Dendritic cell treated with granulocyte-macrophage colony-stimulating factor and Interleukin-4, amounts not matched to agents 40 ng/mL and 50 ng/mL, for 4 days (primary cell): ENCODE measurements at regions of chr1 and their contacts with region 1.

Region 1: GRCh38 chr1:150925816-150926741 is at the start of gene SETDB1:
- H3K4me3 Mint-ChIP-seq: peak within 1 kb of the TSS; percentile 91
- H3K27ac Mint-ChIP-seq: peak within 1 kb of the TSS; percentile 94
- H3K4me1 Mint-ChIP-seq: peaks cover 20% of the 10 kb centered on the region
- H3K27me3 Mint-ChIP-seq: no peaks in the 10 kb centered on the region

Region 2: GRCh38 chr1:150841626-150842025 is 84.5 kb before region 1 on chr1:
- intact Hi-C with region 1: loop called (anchors 10 kb)
- H3K4me3 Mint-ChIP-seq: no peak overlapping the region
- H3K27ac Mint-ChIP-seq: no peak overlapping the region
- H3K4me1 Mint-ChIP-seq: peaks cover 33% of the 10 kb centered on the region
- H3K27me3 Mint-ChIP-seq: no peaks in the 10 kb centered on the region

Region 3: DNA sequence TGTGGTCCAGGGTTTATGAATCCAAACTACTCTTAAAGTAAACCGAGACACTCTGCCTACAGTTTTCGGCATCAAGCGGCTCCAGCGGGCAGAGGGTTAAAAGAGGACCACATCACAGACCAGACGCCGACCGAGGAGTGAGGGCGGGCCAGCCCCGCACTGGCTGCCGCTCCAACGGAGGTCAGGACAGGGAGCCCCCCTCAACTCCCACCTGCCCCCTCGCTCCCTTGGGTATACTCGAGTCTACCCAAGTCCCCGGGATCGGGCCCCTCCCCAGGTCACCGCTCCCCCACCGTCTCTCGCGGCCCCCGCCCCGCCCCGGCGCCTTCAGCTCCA is 50.0 kb before region 1 on chr1:
- intact Hi-C with region 1: loop called (anchors 1 kb)
- H3K4me3 Mint-ChIP-seq: peak overlapping the region; percentile 90
- H3K27ac Mint-ChIP-seq: peak overlapping the region; percentile 96
- H3K4me1 Mint-ChIP-seq: peaks cover 17% of the 10 kb centered on the region
- H3K27me3 Mint-ChIP-seq: no peaks in the 10 kb centered on the region